ENCODE measurements at regions of chr3 and their contacts with region 1.

Region 1: DNA sequence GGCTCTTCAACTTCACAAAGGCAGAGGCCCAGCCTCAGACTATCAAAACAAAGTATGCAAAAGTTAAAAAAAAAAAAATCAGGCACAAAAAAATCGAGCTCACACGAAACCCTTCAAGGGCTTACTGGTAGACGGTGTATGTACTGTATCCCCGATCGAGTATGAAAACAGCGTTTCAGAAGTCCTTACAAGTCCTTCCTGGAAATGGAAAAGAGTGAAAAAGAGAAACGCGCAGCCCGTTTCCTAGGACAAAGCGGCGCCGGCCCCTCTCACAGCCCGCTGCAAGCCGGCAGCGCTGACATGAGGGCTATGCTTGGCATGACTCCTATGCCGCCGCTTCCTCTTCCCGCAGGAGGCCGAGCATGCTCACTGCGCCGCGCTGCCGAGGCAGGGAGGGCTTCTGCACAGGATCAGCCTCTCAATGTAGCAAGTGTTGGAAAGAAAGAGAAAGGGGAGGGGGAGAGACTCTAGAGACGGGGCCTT is at the start of gene VGLL4:
- DNase-seq: peak; percentile 95
- H3K4me3 ChIP-seq: peak within 1 kb of the TSS; percentile 70 to 99 (median 79)
- H3K27ac ChIP-seq: peak within 1 kb of the TSS; percentile 92
- H3K4me1 ChIP-seq: peaks cover 30% of the 10 kb centered on the region
- H3K27me3 ChIP-seq: no peaks in the 10 kb centered on the region
- CTCF ChIP-seq: peak in 1 of 2 donors; percentile 4
- POLR2A ChIP-seq: peak; percentile 95
- total RNA-seq, gene VGLL4: 58.9 and 67.0 TPM in 2 replicates

Region 2: DNA sequence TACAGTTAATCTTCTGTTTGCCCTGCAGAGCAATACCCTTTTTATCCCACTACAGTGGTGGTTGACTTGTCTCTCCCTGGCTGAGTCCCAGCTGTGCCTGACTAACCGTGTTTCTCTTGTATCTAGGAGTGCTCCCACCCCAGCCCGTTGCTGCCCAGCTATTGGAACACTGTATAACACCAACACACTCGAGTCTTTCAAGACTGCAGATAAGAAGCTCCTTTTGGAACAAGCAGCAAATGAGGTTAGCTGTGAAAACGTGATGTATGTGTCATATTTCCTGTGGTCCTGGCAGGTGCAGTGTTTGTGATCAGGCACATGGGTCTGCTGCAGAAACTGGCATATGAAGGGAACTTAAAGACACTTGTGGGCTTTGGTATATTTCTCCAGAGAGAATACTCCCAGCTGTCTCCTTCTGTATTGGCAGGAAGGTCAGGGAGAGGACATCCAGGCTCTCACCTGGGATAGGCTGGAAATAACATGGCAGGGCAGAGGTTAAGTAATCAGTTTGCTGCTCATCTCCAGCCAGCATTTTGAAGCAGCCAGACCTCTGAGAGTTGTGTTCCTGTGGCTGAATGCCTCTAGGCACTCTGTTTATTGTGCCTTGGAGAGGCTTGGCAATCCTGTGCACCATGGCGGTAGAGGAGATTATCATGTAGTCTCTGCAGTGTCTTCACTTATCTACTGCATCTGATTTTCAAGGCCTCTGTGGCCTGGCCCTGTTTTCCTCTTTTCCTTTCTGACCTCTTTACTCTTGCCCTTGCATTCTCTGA is 336.6 kb before region 1 on chr3:
- CTCF ChIA-PET with region 1: no interaction called
- POLR2A ChIA-PET with region 1: no interaction called
- dilution Hi-C with region 1: no loop called
- intact Hi-C with region 1: no loop called
- DNase-seq: peak; percentile 71
- H3K4me3 ChIP-seq: no peak overlapping the region
- H3K27ac ChIP-seq: peak overlapping the region; percentile 47
- H3K4me1 ChIP-seq: peaks cover 22% of the 10 kb centered on the region
- H3K27me3 ChIP-seq: no peaks in the 10 kb centered on the region
- CTCF ChIP-seq: no peak
- POLR2A ChIP-seq: no peak

Region 3: DNA sequence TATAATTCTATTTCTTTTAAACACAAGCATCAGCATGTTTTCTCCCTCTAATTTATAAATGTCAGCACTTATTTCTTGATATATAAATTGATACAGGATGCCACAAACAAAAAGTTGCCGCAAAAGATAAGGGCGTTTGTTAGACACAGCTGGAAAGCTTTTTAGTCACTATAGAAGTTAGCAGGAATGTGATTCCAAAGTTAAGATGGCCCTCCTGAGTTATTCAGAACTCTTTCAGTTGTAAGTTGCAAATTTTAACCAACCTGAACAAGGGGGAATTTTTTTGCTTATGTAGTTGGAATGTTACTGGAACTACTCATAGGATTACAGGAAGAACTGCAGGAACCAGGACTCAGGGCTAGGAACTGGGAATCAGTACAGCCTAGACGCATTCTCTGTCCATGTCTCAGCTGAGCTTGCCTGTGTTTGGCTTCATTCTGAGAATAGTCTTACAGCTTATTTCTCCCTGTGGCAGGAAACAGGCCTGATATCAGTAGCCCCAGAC is 166.2 kb before region 1 on chr3:
- CTCF ChIA-PET with region 1: no interaction called
- POLR2A ChIA-PET with region 1: no interaction called
- dilution Hi-C with region 1: no loop called
- intact Hi-C with region 1: loop called (anchors 1 kb)
- DNase-seq: peak; percentile 95
- H3K4me3 ChIP-seq: peak overlapping the region; percentile 10 to 82 (median 39)
- H3K27ac ChIP-seq: peak overlapping the region; percentile 100
- H3K4me1 ChIP-seq: peaks cover 47% of the 10 kb centered on the region
- H3K27me3 ChIP-seq: no peaks in the 10 kb centered on the region
- CTCF ChIP-seq: no peak
- POLR2A ChIP-seq: peak; percentile 81

Region 4: DNA sequence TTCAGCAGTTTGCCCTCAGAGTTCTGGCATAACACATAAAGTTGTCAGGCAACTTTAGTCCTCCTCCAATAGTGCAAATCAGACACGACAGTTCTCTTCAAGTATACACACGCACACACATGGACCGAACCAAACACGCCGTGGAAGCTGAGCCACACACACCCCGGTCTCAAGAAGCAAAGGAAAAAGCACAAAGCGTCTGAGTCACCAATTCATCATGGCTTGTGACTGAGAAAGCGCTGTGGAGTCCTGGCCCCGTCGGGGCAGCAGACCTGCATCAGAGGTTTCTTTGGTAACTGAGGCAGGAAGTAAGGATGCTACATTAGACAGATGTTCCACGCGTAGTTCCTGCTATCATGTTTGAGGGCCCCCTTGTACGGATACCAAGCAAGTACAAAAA is 85.6 kb before region 1 on chr3:
- CTCF ChIA-PET with region 1: interaction called, 7 read pairs
- POLR2A ChIA-PET with region 1: interaction called, 10 read pairs
- dilution Hi-C with region 1: no loop called
- intact Hi-C with region 1: loop called (anchors 1 kb)
- DNase-seq: peak; percentile 76
- H3K4me3 ChIP-seq: no peak overlapping the region
- H3K27ac ChIP-seq: peak overlapping the region; percentile 78
- H3K4me1 ChIP-seq: peaks cover 51% of the 10 kb centered on the region
- H3K27me3 ChIP-seq: no peaks in the 10 kb centered on the region
- CTCF ChIP-seq: no peak
- POLR2A ChIP-seq: no peak

Region 5: GRCh38 chr3:11591391-11592282 is 52.0 kb before region 1 on chr3:
- CTCF ChIA-PET with region 1: no interaction called
- POLR2A ChIA-PET with region 1: no interaction called
- dilution Hi-C with region 1: no loop called
- intact Hi-C with region 1: no loop called
- DNase-seq: peak; percentile 70
- H3K4me3 ChIP-seq: no peak overlapping the region
- H3K27ac ChIP-seq: peak overlapping the region; percentile 41
- H3K4me1 ChIP-seq: peaks cover 41% of the 10 kb centered on the region
- H3K27me3 ChIP-seq: no peaks in the 10 kb centered on the region
- CTCF ChIP-seq: no peak
- POLR2A ChIP-seq: no peak

Region 6: GRCh38 chr3:11601446-11602238 is 42.0 kb before region 1 on chr3:
- CTCF ChIA-PET with region 1: interaction called, 5 read pairs
- POLR2A ChIA-PET with region 1: no interaction called
- dilution Hi-C with region 1: no loop called
- intact Hi-C with region 1: loop called (anchors 1 kb)
- DNase-seq: no peak
- H3K4me3 ChIP-seq: no peak overlapping the region
- H3K27ac ChIP-seq: peak overlapping the region; percentile 64
- H3K4me1 ChIP-seq: peaks cover 23% of the 10 kb centered on the region
- H3K27me3 ChIP-seq: no peaks in the 10 kb centered on the region
- CTCF ChIP-seq: no peak
- POLR2A ChIP-seq: no peak

Region 7: DNA sequence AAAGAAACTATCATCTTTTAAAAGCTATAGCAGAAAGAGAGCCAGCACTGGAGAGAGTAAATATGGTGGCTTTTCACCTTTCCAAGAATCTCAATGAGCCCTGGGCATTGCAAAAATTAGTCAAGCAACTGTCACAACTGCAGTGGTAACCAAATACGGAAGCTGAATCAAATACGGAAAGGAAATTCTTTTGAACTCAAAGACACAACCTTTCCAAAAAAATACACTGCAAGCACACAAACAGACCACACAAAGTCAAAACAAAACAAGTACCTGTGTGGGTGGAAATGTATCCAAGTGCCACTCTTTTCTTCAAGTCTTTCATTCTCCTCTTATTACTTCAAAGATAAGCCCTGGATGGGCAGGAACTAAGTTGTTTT is 17.6 kb before region 1 on chr3:
- CTCF ChIA-PET with region 1: interaction called, 11 read pairs
- POLR2A ChIA-PET with region 1: interaction called, 4 read pairs
- dilution Hi-C with region 1: no loop called
- intact Hi-C with region 1: no loop called
- DNase-seq: no peak
- H3K4me3 ChIP-seq: no peak overlapping the region
- H3K27ac ChIP-seq: no peak overlapping the region
- H3K4me1 ChIP-seq: peaks cover 21% of the 10 kb centered on the region
- H3K27me3 ChIP-seq: no peaks in the 10 kb centered on the region
- CTCF ChIP-seq: no peak
- POLR2A ChIP-seq: no peak

Region 8: DNA sequence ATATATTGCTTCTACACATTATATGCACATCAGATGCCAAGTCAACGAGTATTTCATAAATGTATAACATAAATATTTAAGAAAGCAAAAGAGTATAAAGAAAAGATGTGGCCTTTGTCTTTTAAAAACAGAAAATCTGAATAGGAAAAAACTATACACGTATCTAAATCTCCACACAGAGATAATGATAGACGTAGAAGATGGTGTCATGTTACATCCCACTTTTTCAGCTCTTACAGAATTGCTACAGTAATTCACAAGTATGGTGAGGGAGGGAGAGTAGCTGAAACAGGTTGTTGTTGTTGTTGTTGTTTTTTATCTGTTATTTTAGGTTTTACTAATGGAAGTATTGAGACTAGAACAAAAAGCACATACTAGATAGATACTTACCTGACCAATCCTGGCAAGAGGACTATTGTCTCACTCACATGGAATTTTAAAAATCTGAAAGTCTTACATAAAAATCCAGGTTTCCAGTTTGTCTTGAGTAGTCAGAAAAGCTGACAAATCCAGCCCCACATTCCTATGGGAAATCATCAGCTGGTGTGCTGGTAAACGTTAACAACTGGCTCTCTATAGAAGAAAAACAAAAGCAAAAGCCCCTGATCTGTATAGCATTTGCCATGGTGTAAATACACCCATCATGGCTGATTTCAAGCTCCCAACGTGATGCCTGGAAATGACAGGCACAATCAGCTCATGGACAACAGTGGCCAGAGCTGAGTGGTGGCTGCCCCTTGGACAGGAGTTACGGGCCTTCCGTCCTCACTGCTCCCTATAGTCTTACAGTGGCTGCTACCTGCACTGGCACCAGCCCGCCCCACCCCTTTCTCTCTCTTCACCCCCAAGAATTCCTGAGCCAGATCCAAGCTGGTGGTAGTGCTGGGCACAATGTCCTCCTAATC is 47.5 kb after region 1 on chr3:
- CTCF ChIA-PET with region 1: no interaction called
- POLR2A ChIA-PET with region 1: no interaction called
- dilution Hi-C with region 1: no loop called
- intact Hi-C with region 1: no loop called
- DNase-seq: peak; percentile 21
- H3K4me3 ChIP-seq: no peak overlapping the region
- H3K27ac ChIP-seq: no peak overlapping the region
- H3K4me1 ChIP-seq: no peaks in the 10 kb centered on the region
- H3K27me3 ChIP-seq: no peaks in the 10 kb centered on the region
- CTCF ChIP-seq: no peak
- POLR2A ChIP-seq: no peak